ENCODE measurements at regions of chr6 and their contacts with region 1.

Region 1: GRCh38 chr6:108558372-108559096 is 2.2 kb upstream of the FOXO3 start:
- ATAC-seq: peak; percentile 39 to 65 (median 59)
- H3K4me3 ChIP-seq: peak overlapping the region; percentile 61 to 89 (median 81)
- H3K27ac ChIP-seq: peak overlapping the region; percentile 94 to 95
- H3K4me1 ChIP-seq: peaks cover 6 to 8% of the 10 kb centered on the region in 2 donors

Region 2: GRCh38 chr6:108782179-108783041 is 223.9 kb after region 1 on chr6:
- in situ Hi-C with region 1: loop called in 5 of 9 experiments (anchors 25 kb)
- ATAC-seq: peak; percentile 94 to 99 (median 98)
- H3K4me3 ChIP-seq: peak overlapping the region; percentile 32 to 42 (median 35)
- H3K27ac ChIP-seq: no peak overlapping the region
- H3K4me1 ChIP-seq: peaks cover 8 to 14% of the 10 kb centered on the region in 2 donors

Measured in motor neuron (in vitro differentiated cells).